ENCODE measurements at regions of chr1 and their contacts with region 1.

Region 1: GRCh38 chr1:207997486-207998268 is 86.8 kb upstream of the CD34 start:
- DNase-seq: peak; percentile 75
- ATAC-seq: peak; percentile 84
- H3K4me3 Mint-ChIP-seq: no peak overlapping the region
- H3K27ac Mint-ChIP-seq: no peak overlapping the region
- H3K4me1 Mint-ChIP-seq: peaks cover 25% of the 10 kb centered on the region
- H3K27me3 Mint-ChIP-seq: peaks cover 10% of the 10 kb centered on the region
- CTCF ChIP-seq: peak; percentile 63

Region 2: DNA sequence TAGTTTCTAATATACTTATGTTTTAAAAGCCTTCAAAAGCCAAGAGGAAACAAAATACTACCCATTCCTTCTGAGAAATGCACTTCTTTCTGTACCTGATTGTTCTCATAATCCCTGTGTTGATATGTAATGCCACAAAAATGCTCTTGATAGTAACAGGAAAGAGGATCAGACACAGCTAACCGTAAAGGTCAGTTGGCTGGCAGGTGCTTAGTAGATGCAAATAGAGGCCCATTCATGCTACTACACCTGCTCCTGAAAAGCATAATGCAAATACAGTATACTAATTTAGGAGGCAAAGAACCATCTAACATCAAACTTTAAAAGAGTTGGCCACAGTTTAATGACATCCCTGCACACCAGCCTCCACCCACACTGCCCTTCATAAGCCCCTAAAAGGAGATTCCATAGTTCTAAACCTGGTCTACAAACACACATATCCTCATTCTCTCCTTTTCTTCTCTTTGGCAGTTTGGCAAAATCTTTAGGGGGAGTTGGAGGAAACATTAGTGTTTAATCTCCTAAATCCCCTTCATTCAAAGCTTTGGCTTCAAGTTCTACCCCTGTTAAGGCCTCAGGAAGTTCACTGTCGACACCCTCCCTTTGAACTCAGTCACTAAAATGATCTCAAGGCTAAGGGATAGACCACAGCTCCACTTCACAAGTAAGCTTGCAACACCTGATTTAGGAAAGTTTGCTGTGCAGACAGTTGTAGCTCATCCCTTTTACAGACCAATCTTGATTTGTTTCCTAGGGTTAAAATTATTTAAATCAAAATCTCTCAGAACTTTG is 248.7 kb before region 1 on chr1:
- CTCF ChIA-PET with region 1: no interaction called
- POLR2A ChIA-PET with region 1: no interaction called
- DNase-seq: no peak
- ATAC-seq: no peak
- H3K4me3 Mint-ChIP-seq: no peak overlapping the region
- H3K27ac Mint-ChIP-seq: peak overlapping the region; percentile 79
- H3K4me1 Mint-ChIP-seq: peaks cover 64% of the 10 kb centered on the region
- H3K27me3 Mint-ChIP-seq: no peaks in the 10 kb centered on the region
- CTCF ChIP-seq: no peak

Region 3: GRCh38 chr1:207885129-207886032 is 112.3 kb before region 1 on chr1:
- CTCF ChIA-PET with region 1: interaction called, 33 read pairs
- POLR2A ChIA-PET with region 1: no interaction called
- DNase-seq: peak; percentile 79
- ATAC-seq: peak; percentile 95
- H3K4me3 Mint-ChIP-seq: no peak overlapping the region
- H3K27ac Mint-ChIP-seq: no peak overlapping the region
- H3K4me1 Mint-ChIP-seq: peaks cover 7% of the 10 kb centered on the region; the same call in 1 of the 2 replicates
- H3K27me3 Mint-ChIP-seq: peaks cover 8% of the 10 kb centered on the region
- CTCF ChIP-seq: peak; percentile 90

Region 4: DNA sequence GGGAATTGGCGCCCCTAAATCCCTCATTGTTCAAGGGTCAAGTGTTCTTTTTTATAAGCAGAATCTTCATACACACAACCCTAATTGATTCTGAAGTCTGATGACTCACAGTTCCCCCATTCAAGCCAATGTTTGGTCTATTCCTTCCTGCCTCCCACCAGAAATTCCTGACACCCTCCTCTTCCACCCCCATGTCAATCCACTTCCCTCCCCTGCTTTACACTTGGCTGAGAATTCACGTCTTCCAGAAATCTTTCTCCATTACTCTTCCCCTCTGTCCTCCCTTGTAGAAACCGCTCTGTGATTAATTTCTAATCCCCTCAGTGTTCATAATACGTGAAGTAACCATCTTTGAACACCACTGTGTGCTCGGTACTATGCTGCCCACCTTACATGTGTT is 10.5 kb before region 1 on chr1:
- CTCF ChIA-PET with region 1: interaction called, 33 read pairs
- POLR2A ChIA-PET with region 1: no interaction called
- DNase-seq: no peak
- ATAC-seq: no peak
- H3K4me3 Mint-ChIP-seq: no peak overlapping the region
- H3K27ac Mint-ChIP-seq: no peak overlapping the region
- H3K4me1 Mint-ChIP-seq: no peaks in the 10 kb centered on the region
- H3K27me3 Mint-ChIP-seq: no peaks in the 10 kb centered on the region; the same call in 1 of the 2 replicates
- CTCF ChIP-seq: no peak

Region 5: GRCh38 chr1:208015255-208015654 is 17.6 kb after region 1 on chr1:
- CTCF ChIA-PET with region 1: interaction called, 34 read pairs
- POLR2A ChIA-PET with region 1: no interaction called
- DNase-seq: no peak
- ATAC-seq: no peak
- H3K4me3 Mint-ChIP-seq: no peak overlapping the region
- H3K27ac Mint-ChIP-seq: no peak overlapping the region
- H3K4me1 Mint-ChIP-seq: no peaks in the 10 kb centered on the region
- H3K27me3 Mint-ChIP-seq: peaks cover 4% of the 10 kb centered on the region
- CTCF ChIP-seq: no peak

Region 6: GRCh38 chr1:208233546-208233945 is 235.9 kb after region 1 on chr1:
- CTCF ChIA-PET with region 1: interaction called, 15 read pairs
- POLR2A ChIA-PET with region 1: no interaction called
- DNase-seq: peak; percentile 69
- ATAC-seq: peak; percentile 86
- H3K4me3 Mint-ChIP-seq: no peak overlapping the region
- H3K27ac Mint-ChIP-seq: peak overlapping the region; percentile 15
- H3K4me1 Mint-ChIP-seq: peaks cover 63% of the 10 kb centered on the region
- H3K27me3 Mint-ChIP-seq: peaks cover 2% of the 10 kb centered on the region
- CTCF ChIP-seq: no peak

Region 7: GRCh38 chr1:208245185-208245705 is 247.6 kb after region 1 on chr1:
- CTCF ChIA-PET with region 1: interaction called, 30 read pairs
- POLR2A ChIA-PET with region 1: no interaction called
- DNase-seq: peak; percentile 84
- ATAC-seq: peak; percentile 51
- H3K4me3 Mint-ChIP-seq: peak overlapping the region; percentile 79
- H3K27ac Mint-ChIP-seq: no peak overlapping the region
- H3K4me1 Mint-ChIP-seq: peaks cover 24% of the 10 kb centered on the region
- H3K27me3 Mint-ChIP-seq: peaks cover 53% of the 10 kb centered on the region
- CTCF ChIP-seq: peak; percentile 57